Colonic mucosa (tissue), 4 donors: ENCODE measurements at regions of chr16 and their contacts with region 1.

Region 1: DNA sequence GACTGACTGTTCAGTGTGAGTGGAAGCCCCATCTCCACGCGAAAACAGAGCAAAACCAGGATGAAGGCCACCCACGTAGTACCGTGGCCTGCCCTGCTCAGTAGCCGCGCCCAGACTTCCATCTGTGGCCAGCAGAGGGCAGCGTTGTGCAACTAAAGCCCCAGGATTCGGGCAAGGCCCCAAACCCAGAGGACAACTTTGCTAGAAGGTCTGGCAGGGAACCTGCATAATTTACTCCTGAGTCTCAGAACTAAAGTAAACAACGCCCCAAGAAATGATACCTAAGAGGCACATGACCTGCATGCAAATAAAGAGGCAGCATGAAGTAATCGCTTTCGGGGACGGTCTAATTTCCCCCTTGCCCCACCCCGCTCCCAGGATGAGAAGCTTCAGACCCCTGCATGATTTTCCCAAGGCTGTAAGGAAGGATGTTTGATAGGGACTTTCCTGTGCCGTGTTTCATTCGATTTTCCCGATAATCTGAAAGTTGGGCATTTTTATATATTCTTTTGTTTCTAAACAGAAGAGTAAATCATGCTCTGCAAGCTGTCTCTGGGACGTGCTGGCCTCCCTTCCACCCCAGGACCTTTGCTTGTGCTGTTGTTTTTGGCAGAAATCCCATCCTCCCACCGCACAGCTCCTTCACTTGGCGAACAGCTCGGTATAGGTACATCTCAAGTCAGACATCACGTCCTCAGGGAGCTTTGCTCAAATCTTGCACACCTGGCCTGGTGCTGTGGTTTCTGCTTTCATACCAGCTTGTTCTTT is 18.6 kb downstream of the HSBP1 start:
- DNase-seq: peak; percentile 72
- H3K4me3 ChIP-seq: no peak overlapping the region
- H3K27ac ChIP-seq: no peak overlapping the region
- H3K4me1 ChIP-seq: no peaks in the 10 kb centered on the region
- H3K27me3 ChIP-seq: no peaks in the 10 kb centered on the region
- CTCF ChIP-seq: peak; percentile 90

Region 2: DNA sequence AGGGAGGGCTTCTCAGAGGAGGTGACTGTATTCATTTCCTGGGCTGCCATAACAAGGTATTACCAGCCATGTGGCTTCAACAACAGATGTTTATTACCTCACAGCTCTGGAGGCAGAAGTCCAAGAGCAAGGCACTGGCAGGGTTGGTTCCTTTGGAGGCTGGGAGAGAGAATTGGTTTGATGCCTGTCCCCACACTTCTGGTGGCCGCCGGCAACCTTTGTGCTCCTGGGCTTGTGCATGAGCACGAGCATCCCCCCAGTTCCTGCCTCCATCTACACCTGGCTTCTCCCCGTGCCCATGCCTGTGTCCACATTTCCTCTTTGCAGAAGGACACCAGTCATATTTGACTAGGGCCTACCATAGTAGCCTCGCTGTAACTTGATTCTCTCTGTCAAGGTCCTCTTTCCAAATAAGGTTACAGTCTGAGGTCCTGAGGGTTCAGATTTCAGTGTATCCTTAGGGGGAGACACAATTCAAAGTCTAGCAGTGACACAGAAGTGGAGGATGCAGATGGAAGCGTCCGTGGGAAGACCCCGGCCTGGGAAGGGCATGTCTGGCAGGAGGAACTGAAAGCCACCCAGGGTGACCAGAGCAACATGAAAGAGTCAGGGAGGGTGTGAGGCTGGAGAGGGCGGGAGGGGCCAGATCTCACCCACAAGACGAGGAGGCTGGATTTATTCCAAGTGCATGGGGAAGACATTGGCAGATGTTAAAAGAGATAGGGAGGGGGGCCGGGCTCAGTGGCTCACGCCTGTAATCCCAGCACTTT is 206.8 kb before region 1 on chr16:
- intact Hi-C with region 1: no loop called
- DNase-seq: no peak
- H3K4me3 ChIP-seq: no peak overlapping the region
- H3K27ac ChIP-seq: no peak overlapping the region
- H3K4me1 ChIP-seq: no peaks in the 10 kb centered on the region
- H3K27me3 ChIP-seq: no peaks in the 10 kb centered on the region
- CTCF ChIP-seq: no peak

Region 3: DNA sequence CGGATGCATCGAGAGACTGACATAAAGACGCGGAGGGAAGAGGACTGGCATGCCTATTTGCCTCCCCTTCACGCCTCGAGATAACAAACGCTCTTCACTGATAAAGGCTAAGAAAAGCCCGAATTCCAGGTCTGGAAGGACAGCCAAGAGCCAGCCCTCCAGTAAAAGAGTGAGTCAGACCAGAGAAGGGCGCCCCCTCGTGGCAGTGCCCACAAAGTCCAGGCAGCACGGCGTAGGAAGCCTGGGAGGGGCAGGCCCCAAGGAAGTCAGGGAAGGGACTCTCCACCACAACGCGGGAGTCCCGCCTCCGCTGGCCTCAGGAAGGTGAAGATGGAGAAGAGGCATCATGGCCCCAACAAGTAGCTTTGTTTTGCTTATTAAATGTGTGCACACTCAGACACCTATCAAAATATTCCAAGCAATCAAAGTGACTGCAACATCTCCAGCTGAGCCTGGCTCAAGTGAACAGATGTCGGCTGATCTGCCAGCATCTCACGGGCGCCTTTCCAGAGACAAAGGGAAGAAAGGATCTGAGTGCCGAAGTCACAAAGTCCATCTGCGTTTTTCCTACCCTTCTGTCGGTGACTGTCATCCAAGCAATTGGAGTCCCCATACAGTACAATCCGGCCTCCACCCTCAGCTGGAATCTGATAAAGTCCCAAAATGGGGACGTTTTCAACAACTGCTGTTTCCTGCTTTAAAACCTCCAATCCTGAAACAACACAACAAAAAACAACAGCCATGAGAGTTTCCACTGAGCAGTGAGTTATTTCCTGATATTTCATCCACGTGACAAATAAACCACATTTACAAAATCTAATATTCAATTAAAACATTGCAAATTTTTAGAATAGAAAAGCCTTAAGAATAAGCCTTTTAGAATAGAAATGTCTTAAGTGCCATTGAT is 236.7 kb after region 1 on chr16:
- intact Hi-C with region 1: loop called (anchors 5 kb)
- DNase-seq: peak; percentile 69
- H3K4me3 ChIP-seq: no peak overlapping the region
- H3K27ac ChIP-seq: no peak overlapping the region
- H3K4me1 ChIP-seq: no peaks in the 10 kb centered on the region
- H3K27me3 ChIP-seq: no peaks in the 10 kb centered on the region
- CTCF ChIP-seq: peak; percentile 89